PC-3 (cell line): ENCODE measurements at regions of chr15 and their contacts with region 1.

Region 1: DNA sequence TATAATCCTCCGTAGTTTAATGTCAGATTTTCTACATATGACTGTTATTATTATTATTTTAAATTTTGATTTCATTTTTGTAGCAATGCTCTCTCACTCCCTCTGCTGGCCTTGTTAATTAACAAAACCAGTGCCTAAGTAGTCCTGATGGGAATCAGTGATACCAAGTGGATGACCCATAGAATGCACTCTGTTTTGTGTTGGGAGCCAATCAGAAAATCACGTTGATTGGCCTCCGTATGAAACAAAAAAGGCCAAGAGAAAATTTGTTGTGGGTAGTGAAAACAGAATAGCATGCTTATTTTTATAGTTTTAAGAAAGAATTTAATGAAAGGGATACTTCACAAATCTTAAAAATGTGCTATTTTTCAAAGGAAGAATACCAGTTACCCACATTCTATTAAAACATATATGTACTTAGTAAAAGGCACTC is 34.4 kb upstream of the MEIS2 start:
- DNase-seq: peak; percentile 67
- ATAC-seq: peak; percentile 86
- H3K4me3 ChIP-seq: no peak overlapping the region
- H3K27ac ChIP-seq: no peak overlapping the region
- H3K4me1 ChIP-seq: peaks cover 9% of the 10 kb centered on the region; the same call in 1 of the 2 replicates
- H3K27me3 ChIP-seq: peaks cover 7% of the 10 kb centered on the region; the same call in 1 of the 2 replicates
- CTCF ChIP-seq: peak; percentile 66

Region 2: DNA sequence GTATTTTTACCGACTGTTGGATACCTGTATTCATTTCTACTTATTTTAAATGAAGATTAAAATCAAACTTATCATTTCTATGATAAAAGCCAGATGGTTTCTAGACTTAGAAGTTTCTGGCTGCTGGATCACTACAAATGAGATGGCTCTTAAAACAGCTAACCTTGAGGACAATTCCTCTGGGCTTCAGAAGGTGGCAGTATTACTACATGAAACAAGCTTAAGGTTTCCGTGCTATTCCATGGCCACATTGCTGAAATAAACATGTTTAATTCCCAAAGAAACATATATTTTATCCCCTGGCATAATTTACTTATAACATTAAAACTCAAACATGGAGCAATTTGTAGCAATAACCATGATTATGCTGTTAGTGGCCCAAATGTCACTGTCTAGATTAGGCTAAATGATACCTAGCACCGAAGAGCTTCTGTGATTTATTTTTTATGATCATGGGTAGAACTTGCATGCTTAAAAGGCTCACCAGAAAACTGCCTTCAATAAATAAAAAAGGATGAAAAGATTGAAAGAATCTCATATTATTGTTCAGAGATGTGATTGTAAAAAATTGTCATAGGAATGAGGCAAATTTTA is 1845.6 kb before region 1 on chr15:
- CTCF ChIA-PET with region 1: no interaction called
- POLR2A ChIA-PET with region 1: no interaction called
- intact Hi-C with region 1: loop called (anchors 10 kb)
- DNase-seq: peak; percentile 74
- ATAC-seq: peak; percentile 48
- H3K4me3 ChIP-seq: no peak overlapping the region
- H3K27ac ChIP-seq: no peak overlapping the region
- H3K4me1 ChIP-seq: peaks cover 16% of the 10 kb centered on the region
- H3K27me3 ChIP-seq: no peaks in the 10 kb centered on the region
- CTCF ChIP-seq: peak; percentile 92

Region 3: GRCh38 chr15:36208868-36209582 is 925.7 kb before region 1 on chr15:
- CTCF ChIA-PET with region 1: no interaction called
- POLR2A ChIA-PET with region 1: no interaction called
- intact Hi-C with region 1: loop called (anchors 1 kb)
- DNase-seq: no peak
- ATAC-seq: no peak
- H3K4me3 ChIP-seq: no peak overlapping the region
- H3K27ac ChIP-seq: no peak overlapping the region
- H3K4me1 ChIP-seq: peaks cover 13% of the 10 kb centered on the region
- H3K27me3 ChIP-seq: no peaks in the 10 kb centered on the region
- CTCF ChIP-seq: peak; percentile 46; the same call in 1 of the 2 replicates

Region 4: DNA sequence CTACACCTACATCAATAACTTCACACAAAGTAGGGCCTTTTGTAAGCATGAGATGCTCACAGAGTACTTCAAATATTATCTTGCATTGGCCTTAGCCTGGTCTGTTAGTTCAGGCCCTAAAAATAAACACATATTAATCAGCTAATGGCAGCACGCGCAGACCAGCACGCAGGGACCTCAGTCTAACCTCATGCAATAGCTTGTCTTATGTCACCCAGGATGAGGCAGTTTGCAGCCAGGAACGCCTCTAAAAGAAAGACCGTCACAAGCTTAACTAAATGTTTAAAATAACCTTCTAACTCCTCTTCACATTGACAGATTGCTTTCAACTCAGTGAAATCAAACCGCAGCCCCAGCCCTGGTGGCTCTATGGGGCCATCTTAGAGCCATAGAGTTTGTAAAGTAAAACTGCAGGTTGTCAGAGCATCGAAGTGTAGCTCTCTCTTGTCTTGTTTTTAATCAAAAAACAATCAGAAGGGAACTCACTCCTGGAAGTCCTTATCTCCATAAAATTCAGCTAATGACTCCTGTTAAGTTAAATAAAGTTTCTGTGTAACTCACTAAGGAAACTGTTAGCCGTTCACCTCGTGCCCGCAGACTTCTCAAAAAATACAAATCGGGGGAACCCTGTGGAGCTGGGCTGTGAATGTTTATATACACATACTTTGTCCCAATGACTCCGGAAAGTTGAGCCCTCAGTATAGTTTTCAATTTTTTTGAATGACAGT is 342.7 kb before region 1 on chr15:
- CTCF ChIA-PET with region 1: no interaction called
- POLR2A ChIA-PET with region 1: no interaction called
- intact Hi-C with region 1: loop called (anchors 5 kb)
- DNase-seq: no peak
- ATAC-seq: no peak
- H3K4me3 ChIP-seq: no peak overlapping the region
- H3K27ac ChIP-seq: no peak overlapping the region
- H3K4me1 ChIP-seq: peaks cover 13% of the 10 kb centered on the region
- H3K27me3 ChIP-seq: no peaks in the 10 kb centered on the region
- CTCF ChIP-seq: no peak

Region 5: GRCh38 chr15:37100109-37100965 is 34.4 kb before region 1 on chr15 and contains the start of gene MEIS2:
- CTCF ChIA-PET with region 1: no interaction called
- POLR2A ChIA-PET with region 1: interaction called, 3 read pairs
- intact Hi-C with region 1: loop called (anchors 2 kb)
- DNase-seq: peak; percentile 85
- ATAC-seq: peak; percentile 41
- H3K4me3 ChIP-seq: peak within 1 kb of the TSS; percentile 93
- H3K27ac ChIP-seq: peak within 1 kb of the TSS; percentile 87
- H3K4me1 ChIP-seq: peaks cover 24% of the 10 kb centered on the region; the same call in 1 of the 2 replicates
- H3K27me3 ChIP-seq: no peaks in the 10 kb centered on the region
- CTCF ChIP-seq: no peak
- total RNA-seq, gene MEIS2: 10.0 and 17.5 TPM in 2 replicates

Region 6: GRCh38 chr15:37394402-37395099 is 259.8 kb after region 1 on chr15:
- CTCF ChIA-PET with region 1: no interaction called
- POLR2A ChIA-PET with region 1: no interaction called
- intact Hi-C with region 1: no loop called
- DNase-seq: no peak
- ATAC-seq: no peak
- H3K4me3 ChIP-seq: no peak overlapping the region
- H3K27ac ChIP-seq: no peak overlapping the region
- H3K4me1 ChIP-seq: no peaks in the 10 kb centered on the region
- H3K27me3 ChIP-seq: peaks cover 16% of the 10 kb centered on the region; the same call in 1 of the 2 replicates
- CTCF ChIP-seq: no peak

Region 7: DNA sequence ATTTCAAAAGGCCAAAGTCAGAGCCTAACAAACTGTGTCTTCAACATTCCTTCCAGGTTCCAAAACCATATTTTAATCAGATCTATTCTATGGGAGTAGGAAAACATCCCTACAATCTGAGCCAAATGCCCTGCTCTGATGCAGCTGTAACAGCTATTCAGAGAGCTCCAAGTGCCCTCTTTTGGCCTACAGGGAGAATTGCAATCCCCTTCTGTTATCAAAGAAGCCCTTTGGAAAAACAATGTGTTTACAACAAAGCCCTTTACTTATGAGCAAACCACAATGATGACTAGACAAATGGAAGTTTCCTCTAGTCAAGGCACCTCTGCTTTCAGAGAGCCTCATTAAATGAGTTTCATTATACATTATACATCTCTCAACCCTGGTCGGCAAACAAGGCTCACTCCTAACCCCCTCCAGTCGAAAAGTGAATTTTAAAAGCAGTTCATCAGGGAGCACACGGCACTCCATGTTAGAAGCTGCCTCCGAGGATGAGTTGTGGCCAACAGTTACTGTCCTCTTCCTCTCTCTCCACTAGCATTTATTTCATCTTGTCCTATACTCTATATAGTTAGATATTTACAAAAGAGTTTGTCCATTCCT is 757.2 kb after region 1 on chr15:
- CTCF ChIA-PET with region 1: no interaction called
- POLR2A ChIA-PET with region 1: no interaction called
- intact Hi-C with region 1: loop called (anchors 5 kb)
- DNase-seq: peak; percentile 72
- ATAC-seq: peak; percentile 94
- H3K4me3 ChIP-seq: no peak overlapping the region
- H3K27ac ChIP-seq: no peak overlapping the region
- H3K4me1 ChIP-seq: peaks cover 4% of the 10 kb centered on the region; the same call in 1 of the 2 replicates
- H3K27me3 ChIP-seq: peaks cover 23% of the 10 kb centered on the region
- CTCF ChIP-seq: peak; percentile 92